ENCODE measurements at regions of chr15 and their contacts with region 1.

Region 1: GRCh38 chr15:35740761-35741160 is 194.8 kb upstream of the DPH6 start:
- ATAC-seq: peak in 3 of 8 experiments; percentile 63 to 93 (median 85)
- H3K4me3 ChIP-seq: no peak overlapping the region
- H3K27ac ChIP-seq: no peak overlapping the region
- H3K4me1 ChIP-seq: no peaks in the 10 kb centered on the region

Region 2: DNA sequence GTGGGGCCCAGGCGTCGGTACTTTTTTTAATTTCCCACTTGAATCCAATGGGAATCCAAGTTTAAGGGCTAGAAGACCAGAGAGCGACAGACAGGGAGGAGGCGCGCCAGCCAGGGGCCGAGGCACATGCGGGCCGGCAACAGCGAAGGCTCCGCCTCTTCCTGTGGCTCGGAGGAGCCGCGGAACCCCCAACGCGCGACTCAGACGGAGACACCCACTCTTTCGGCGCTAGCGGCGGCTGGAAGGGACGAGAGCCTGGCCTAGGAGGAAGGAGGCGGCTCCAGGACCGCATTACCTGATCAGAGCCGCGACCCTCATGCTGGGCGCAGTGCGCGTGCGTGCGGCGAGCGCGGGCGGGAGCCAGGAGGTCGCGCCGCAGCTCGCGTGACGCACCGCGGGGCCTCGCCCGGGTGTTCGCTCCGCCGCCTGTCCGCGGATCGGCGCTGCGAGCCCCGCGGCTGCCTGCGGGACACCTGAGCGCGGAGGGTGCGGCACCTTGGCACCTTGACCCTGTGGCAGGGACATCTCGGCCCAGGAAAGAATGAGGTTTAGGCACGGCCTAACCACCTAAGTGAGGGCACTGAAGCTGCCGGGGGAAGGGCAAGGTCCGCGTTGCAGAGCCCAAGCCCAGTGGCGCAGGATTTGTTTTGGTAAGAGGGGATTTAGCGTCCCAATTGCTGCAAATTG is 194.8 kb before region 1 on chr15 and contains the start of gene DPH6:
- in situ Hi-C with region 1: loop called in 2 of 9 experiments (anchors 25 kb)
- ATAC-seq: peak; percentile 88 to 95 (median 90)
- H3K4me3 ChIP-seq: peak within 1 kb of the TSS; percentile 44 to 93 (median 69)
- H3K27ac ChIP-seq: peak within 1 kb of the TSS; percentile 98 to 100
- H3K4me1 ChIP-seq: peaks cover 5 to 29% of the 10 kb centered on the region in 2 donors
- total RNA-seq, gene DPH6: 11.0 to 24.0 (median 15.2) TPM

Region 3: GRCh38 chr15:35852818-35853624 is 112.3 kb after region 1 on chr15:
- in situ Hi-C with region 1: no loop called
- ATAC-seq: no peak
- H3K4me3 ChIP-seq: no peak overlapping the region
- H3K27ac ChIP-seq: no peak overlapping the region
- H3K4me1 ChIP-seq: peaks cover 0 to 12% of the 10 kb centered on the region in 2 donors

Measured in motor neuron (in vitro differentiated cells).